Activated T-helper 1 cell treated with anti-CD3 and anti-CD28 coated beads, Interleukin-12 subunit alpha, Interleukin-12 subunit beta, Interleukin-2, Interleukin-4 antibody, amounts not matched to agents 30 ng/mL and 10 ng/mL and 1 ng/mL, durations not matched to agents 14 hours and 24 hours and 36 hours (primary cell): ENCODE measurements at regions of chr20 and their contacts with region 1.

Region 1: GRCh38 chr20:10511509-10512251 is 76.6 kb downstream of the SLX4IP start:
- DNase-seq: peak; percentile 70
- H3K4me3 Mint-ChIP-seq: peak overlapping the region; percentile 36
- H3K27ac Mint-ChIP-seq: peak overlapping the region; percentile 64
- H3K4me1 Mint-ChIP-seq: peaks cover 44% of the 10 kb centered on the region
- H3K27me3 Mint-ChIP-seq: no peaks in the 10 kb centered on the region

Region 2: GRCh38 chr20:10447027-10447426 is 64.7 kb before region 1 on chr20:
- intact Hi-C with region 1: loop called (anchors 2 kb)
- DNase-seq: peak; percentile 27
- H3K4me3 Mint-ChIP-seq: peak overlapping the region; percentile 55
- H3K27ac Mint-ChIP-seq: peak overlapping the region; percentile 70
- H3K4me1 Mint-ChIP-seq: peaks cover 21% of the 10 kb centered on the region
- H3K27me3 Mint-ChIP-seq: no peaks in the 10 kb centered on the region

Region 3: DNA sequence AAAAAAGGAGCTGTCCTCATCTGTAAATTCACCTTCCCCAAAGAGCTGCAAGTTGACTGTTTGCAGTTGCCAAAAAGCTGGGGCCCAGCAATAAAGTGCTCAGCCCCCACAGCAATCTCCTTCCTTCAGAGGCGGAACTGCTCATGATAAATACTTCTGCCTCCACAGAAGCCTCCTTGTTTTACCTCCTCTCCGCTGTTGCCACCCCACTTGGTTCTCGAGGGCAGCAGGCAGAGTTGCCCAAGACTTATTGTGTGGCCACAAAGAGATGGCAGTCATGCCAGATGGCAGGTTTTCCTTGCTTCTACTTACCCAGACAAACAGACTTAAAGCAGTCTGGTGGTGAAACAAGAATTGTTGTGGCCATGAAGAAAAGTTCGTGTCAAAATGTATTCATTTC is 10.3 kb before region 1 on chr20:
- intact Hi-C with region 1: loop called (anchors 1 kb)
- DNase-seq: peak; percentile 9
- H3K4me3 Mint-ChIP-seq: peak overlapping the region; percentile 81
- H3K27ac Mint-ChIP-seq: peak overlapping the region; percentile 62
- H3K4me1 Mint-ChIP-seq: peaks cover 50% of the 10 kb centered on the region
- H3K27me3 Mint-ChIP-seq: no peaks in the 10 kb centered on the region

Region 4: DNA sequence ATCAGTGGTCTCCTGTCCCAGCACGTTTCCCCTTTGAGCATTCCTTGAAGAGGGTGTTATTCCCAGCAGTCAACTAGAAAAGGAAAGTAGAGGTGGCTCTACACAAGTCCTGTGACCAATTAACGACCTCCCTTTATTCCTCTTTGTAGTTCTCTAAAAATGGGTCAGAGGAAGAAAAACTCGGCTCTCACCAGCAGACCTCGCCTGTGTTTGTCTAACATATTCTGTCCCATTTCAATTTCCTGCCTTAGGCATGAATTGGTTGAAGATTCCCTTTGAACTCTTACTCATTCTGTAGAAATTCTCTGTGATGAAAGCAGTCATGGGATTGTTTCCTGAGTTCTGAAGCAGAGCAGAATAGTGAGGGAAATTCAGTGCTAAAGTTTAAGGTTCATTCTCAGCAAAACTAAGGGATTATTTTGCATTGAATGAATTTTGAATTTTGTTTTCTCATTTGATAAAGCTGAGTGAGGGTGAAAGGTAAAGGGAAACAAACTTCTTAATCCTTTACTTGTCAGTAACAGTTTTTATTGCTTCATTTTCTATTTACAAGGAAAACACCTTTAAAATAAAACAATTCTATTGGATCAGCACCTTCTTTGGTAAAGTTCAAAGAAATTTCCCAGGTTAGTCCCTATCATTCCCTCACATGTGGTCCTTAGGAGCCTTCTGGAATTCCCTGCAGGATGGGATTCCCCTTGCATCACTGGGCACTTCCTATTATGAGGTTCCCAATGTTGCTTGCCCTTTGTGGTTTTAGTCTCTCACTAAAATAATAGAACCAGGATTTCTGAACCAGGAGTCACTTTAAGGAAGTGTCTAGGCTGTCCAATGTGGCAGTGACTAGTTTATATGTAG is 29.2 kb after region 1 on chr20:
- intact Hi-C with region 1: no loop called
- DNase-seq: no peak
- H3K4me3 Mint-ChIP-seq: no peak overlapping the region
- H3K27ac Mint-ChIP-seq: no peak overlapping the region
- H3K4me1 Mint-ChIP-seq: peaks cover 18% of the 10 kb centered on the region
- H3K27me3 Mint-ChIP-seq: no peaks in the 10 kb centered on the region